ENCODE measurements at regions of chr10 and their contacts with region 1.

Region 1: GRCh38 chr10:86585037-86585725 is 63.6 kb upstream of the WAPL start:
- DNase-seq: peak; percentile 79
- H3K4me3 Mint-ChIP-seq: no peak overlapping the region
- H3K27ac Mint-ChIP-seq: no peak overlapping the region
- H3K4me1 Mint-ChIP-seq: no peaks in the 10 kb centered on the region
- H3K27me3 Mint-ChIP-seq: no peaks in the 10 kb centered on the region

Region 2: DNA sequence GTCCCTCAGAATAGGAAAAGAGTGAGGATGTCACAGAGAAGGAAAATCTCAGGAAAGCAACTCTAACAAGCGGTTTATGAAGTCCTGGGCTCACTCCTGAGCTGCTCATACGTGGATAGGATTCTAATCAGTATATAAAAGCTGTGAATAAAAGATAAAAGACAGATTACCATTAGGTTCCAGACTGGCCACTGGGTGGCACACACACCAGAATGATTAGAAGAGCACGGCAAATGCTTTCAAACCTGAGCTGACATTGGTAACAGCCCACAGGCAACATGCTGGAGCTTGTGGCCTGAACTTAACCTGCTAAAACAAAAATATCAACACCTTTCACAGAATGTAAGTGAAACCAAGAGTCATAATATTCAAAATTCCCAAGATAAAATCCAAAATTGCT is 589.4 kb before region 1 on chr10:
- CTCF ChIA-PET with region 1: no interaction called
- intact Hi-C with region 1: loop called (anchors 5 kb)
- DNase-seq: peak; percentile 30
- H3K4me3 Mint-ChIP-seq: no peak overlapping the region
- H3K27ac Mint-ChIP-seq: no peak overlapping the region
- H3K4me1 Mint-ChIP-seq: no peaks in the 10 kb centered on the region
- H3K27me3 Mint-ChIP-seq: peaks cover 14% of the 10 kb centered on the region

Region 3: GRCh38 chr10:86389441-86390193 is 195.6 kb before region 1 on chr10:
- CTCF ChIA-PET with region 1: interaction called, 12 read pairs
- intact Hi-C with region 1: no loop called
- DNase-seq: no peak
- H3K4me3 Mint-ChIP-seq: peak overlapping the region; percentile 72
- H3K27ac Mint-ChIP-seq: no peak overlapping the region
- H3K4me1 Mint-ChIP-seq: peaks cover 7% of the 10 kb centered on the region
- H3K27me3 Mint-ChIP-seq: peaks cover 25% of the 10 kb centered on the region

Region 4: GRCh38 chr10:86535057-86535882 is 49.9 kb before region 1 on chr10:
- CTCF ChIA-PET with region 1: interaction called, 3 read pairs
- intact Hi-C with region 1: loop called (anchors 2 kb)
- DNase-seq: peak; percentile 34
- H3K4me3 Mint-ChIP-seq: peak overlapping the region; percentile 70
- H3K27ac Mint-ChIP-seq: peak overlapping the region; percentile 66
- H3K4me1 Mint-ChIP-seq: peaks cover 26% of the 10 kb centered on the region
- H3K27me3 Mint-ChIP-seq: no peaks in the 10 kb centered on the region

Region 5: DNA sequence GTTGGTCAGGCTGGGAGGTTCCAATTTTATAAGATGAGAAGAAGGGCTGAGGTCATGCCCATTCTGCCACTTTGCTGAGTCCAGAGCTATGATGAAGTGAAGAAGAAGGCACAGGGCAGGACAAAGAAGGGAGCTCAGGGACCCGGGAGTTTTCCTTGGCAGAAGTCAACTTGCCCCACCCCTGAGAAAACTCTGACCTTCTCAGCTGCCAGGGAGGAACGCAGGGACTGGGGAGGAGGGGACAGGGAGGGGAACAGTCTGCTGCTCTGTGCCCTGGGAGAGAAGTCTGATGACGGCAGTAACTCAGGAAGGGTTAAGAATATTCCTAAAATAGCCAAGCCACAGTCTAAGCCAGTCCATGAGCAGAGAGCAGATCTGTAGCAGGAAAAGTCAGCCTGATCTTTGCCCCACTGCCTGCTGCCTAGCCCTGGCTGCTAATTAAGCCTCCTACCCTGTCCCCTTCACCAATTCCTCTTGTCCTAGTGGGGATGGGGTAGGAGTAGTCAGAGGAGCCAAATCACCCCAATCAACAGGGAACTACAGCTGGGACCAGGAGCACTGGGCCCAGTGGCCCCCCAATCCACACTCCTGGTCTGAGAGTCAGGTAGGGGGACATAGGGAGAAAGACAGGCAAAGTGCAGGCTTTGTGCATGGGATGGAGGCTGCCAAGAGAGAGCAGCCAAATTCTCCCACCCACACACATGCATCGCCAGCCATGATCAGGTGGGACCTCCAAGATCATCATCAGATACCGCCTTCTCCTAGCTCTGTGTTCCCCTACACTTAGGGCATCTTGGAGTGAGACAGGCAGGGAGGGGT is 395.0 kb after region 1 on chr10:
- CTCF ChIA-PET with region 1: no interaction called
- intact Hi-C with region 1: no loop called
- DNase-seq: no peak
- H3K4me3 Mint-ChIP-seq: no peak overlapping the region
- H3K27ac Mint-ChIP-seq: no peak overlapping the region
- H3K4me1 Mint-ChIP-seq: no peaks in the 10 kb centered on the region
- H3K27me3 Mint-ChIP-seq: no peaks in the 10 kb centered on the region

Measured in activated naive CD4-positive, alpha-beta T cell treated with anti-CD3 and anti-CD28 coated beads for 36 hours (primary cell).